Activated naive CD4-positive, alpha-beta T cell treated with anti-CD3 and anti-CD28 coated beads, Interleukin-2, amount 10 ng/mL, durations not matched to agents 7 days and 5 days (primary cell): ENCODE measurements at regions of chr7 and their contacts with region 1.

Region 1: DNA sequence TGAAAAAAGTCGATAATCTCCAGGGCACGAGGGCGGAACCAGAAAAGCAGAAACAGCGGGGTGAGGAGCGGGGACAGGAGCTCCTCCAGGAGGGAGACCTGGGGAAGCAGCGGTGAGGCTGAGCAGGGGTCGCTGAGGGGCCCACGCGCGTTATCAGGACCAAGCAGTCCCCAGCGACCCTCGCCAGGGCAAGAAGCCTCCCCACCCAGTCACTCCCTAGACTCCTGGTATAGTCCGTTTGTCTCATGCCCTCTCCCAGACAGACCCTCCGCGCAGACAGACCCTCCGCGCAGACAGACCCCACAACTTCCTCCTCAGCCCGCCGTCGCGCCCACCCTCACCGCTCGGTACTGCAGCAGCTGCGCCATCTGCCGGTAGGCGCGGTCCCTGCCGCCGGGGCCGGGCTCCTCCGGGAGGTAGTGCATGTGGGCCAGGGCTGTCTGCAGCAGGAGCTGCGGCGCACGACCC is 6.3 kb downstream of the ATG9B start:
- DNase-seq: peak; percentile 86
- H3K4me3 Mint-ChIP-seq: peak overlapping the region; percentile 74
- H3K27ac Mint-ChIP-seq: peak overlapping the region; percentile 68
- H3K4me1 Mint-ChIP-seq: peaks cover 68% of the 10 kb centered on the region
- H3K27me3 Mint-ChIP-seq: peaks cover 51% of the 10 kb centered on the region

Region 2: GRCh38 chr7:151032936-151033863 is 15.2 kb after region 1 on chr7:
- CTCF ChIA-PET with region 1: interaction called, 10 read pairs
- DNase-seq: no peak
- H3K4me3 Mint-ChIP-seq: no peak overlapping the region
- H3K27ac Mint-ChIP-seq: no peak overlapping the region
- H3K4me1 Mint-ChIP-seq: peaks cover 14% of the 10 kb centered on the region
- H3K27me3 Mint-ChIP-seq: no peaks in the 10 kb centered on the region

Region 3: DNA sequence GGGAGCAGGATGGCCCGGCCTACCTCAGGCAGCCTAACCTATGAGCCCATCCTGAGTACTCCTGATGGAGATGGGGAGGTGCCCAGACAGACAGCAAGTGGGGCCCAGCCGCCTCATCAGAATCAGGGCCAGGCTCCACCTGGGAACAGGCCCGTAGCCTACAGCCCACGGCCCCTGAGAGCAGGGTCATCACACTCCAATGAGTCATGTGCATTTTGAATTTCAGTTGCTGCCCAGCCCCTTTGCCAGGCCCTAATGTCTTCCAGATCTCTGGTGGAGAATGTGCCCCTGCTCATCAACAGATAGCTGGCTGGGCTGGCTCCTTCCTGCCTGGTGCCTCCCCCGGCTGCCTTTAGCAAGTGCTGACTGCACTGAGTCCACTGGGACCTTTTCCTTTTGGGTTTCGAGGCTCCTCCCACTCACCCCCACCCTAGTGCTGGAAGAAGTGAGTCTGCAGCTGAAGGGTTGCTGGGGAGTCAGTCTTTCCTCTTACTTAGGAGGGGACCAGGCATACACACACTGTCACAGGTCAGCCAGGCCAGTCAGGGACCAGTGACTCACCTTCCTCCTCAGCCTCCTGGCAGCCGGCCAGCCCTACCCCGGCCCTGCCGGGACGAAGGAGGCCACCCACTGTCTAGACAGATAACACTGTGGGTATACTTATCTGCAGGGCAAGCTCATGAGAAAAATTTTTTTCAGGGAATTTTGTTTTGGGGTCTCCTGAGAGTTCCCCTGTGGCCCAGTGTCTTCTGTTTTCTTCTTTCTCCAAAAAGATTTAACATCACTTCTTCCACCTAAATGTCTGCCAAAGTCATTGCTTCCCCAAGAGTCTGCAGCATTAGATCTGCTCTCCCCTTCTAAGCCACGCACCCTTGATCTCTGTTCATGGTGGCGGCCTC is 21.2 kb after region 1 on chr7:
- CTCF ChIA-PET with region 1: interaction called, 10 read pairs
- DNase-seq: no peak
- H3K4me3 Mint-ChIP-seq: no peak overlapping the region
- H3K27ac Mint-ChIP-seq: no peak overlapping the region
- H3K4me1 Mint-ChIP-seq: peaks cover 3% of the 10 kb centered on the region
- H3K27me3 Mint-ChIP-seq: no peaks in the 10 kb centered on the region